Dendritic cell treated with granulocyte-macrophage colony-stimulating factor and Interleukin-4, amounts not matched to agents 40 ng/mL and 50 ng/mL, for 4 days (primary cell): ENCODE measurements at regions of chr12 and their contacts with region 1.

Region 1: GRCh38 chr12:100566887-100567637 is 6.4 kb upstream of the GAS2L3 start:
- H3K4me3 Mint-ChIP-seq: no peak overlapping the region
- H3K27ac Mint-ChIP-seq: peak overlapping the region; percentile 84
- H3K4me1 Mint-ChIP-seq: peaks cover 64% of the 10 kb centered on the region
- H3K27me3 Mint-ChIP-seq: no peaks in the 10 kb centered on the region

Region 2: GRCh38 chr12:100391856-100392255 is 175.2 kb before region 1 on chr12:
- intact Hi-C with region 1: no loop called
- H3K4me3 Mint-ChIP-seq: no peak overlapping the region
- H3K27ac Mint-ChIP-seq: no peak overlapping the region
- H3K4me1 Mint-ChIP-seq: no peaks in the 10 kb centered on the region
- H3K27me3 Mint-ChIP-seq: no peaks in the 10 kb centered on the region

Region 3: GRCh38 chr12:100584256-100584655 is 17.2 kb after region 1 on chr12:
- intact Hi-C with region 1: no loop called
- H3K4me3 Mint-ChIP-seq: no peak overlapping the region
- H3K27ac Mint-ChIP-seq: no peak overlapping the region
- H3K4me1 Mint-ChIP-seq: peaks cover 17% of the 10 kb centered on the region
- H3K27me3 Mint-ChIP-seq: no peaks in the 10 kb centered on the region

Region 4: DNA sequence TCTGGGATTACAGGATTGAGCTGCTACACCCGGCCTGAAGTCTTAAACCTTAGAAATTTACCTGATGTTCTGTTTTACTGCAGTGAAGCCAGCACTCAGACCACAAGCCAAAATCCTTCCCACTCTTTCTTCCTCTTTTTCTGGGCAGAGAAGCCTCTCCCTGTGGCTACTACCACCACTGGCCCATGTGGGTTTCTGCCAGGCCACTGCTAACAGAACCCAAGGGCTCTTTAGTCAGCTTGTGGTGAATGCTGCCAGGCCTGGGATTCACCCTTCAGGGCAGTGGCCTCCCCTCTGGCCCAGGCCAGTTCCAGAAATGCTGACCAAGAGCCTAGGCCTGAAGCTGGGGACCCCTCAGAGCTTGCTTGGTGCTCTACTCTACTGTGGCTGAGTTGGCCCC is 41.7 kb after region 1 on chr12:
- intact Hi-C with region 1: loop called (anchors 5 kb)
- H3K4me3 Mint-ChIP-seq: peak overlapping the region; percentile 41
- H3K27ac Mint-ChIP-seq: peak overlapping the region; percentile 85
- H3K4me1 Mint-ChIP-seq: peaks cover 53% of the 10 kb centered on the region
- H3K27me3 Mint-ChIP-seq: no peaks in the 10 kb centered on the region

Region 5: DNA sequence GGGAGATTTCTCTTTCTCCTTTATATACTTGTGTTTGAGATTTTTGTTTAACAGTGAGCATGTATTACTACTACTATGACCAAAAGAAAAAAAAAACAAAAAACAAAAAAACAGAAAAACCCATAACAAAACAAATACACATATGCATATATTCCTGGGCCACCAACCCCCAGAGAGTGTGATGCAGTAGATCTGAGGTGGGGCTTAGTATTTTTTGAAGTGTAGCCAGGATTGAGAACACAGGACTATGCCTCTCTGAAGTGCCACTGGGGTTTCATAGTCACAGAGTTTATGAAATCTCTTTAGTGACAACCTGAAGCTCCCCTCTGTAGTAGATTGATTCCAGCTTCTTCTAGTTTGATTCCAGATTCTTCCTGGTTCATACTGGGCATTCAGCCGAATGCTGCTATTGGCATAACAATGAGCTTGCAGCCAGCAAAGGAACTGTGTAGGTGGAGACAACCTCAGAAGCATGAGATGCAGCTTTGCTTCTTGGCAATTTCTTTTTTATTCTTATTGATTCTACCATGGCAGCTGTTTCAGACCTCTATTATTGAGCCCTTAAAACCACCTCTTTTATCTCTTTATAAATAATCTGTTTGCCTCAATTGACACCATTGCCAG is 212.0 kb after region 1 on chr12:
- intact Hi-C with region 1: no loop called
- H3K4me3 Mint-ChIP-seq: no peak overlapping the region
- H3K27ac Mint-ChIP-seq: no peak overlapping the region
- H3K4me1 Mint-ChIP-seq: no peaks in the 10 kb centered on the region
- H3K27me3 Mint-ChIP-seq: no peaks in the 10 kb centered on the region